ENCODE measurements at regions of chr14 and their contacts with region 1.

Region 1: GRCh38 chr14:102351026-102351425 is 11.7 kb downstream of the CINP start:
- DNase-seq: no peak
- ATAC-seq: no peak
- H3K4me3 ChIP-seq: no peak overlapping the region
- H3K4me3 Mint-ChIP-seq: no peak overlapping the region
- H3K27ac ChIP-seq: no peak overlapping the region
- H3K27ac Mint-ChIP-seq: no peak overlapping the region
- H3K4me1 ChIP-seq: no peaks in the 10 kb centered on the region
- H3K4me1 Mint-ChIP-seq: peaks cover 0 to 5% (median 2%) of the 10 kb centered on the region in 3 donors
- H3K27me3 ChIP-seq: no peaks in the 10 kb centered on the region
- H3K27me3 Mint-ChIP-seq: no peaks in the 10 kb centered on the region

Region 2: GRCh38 chr14:102408724-102409123 is 57.7 kb after region 1 on chr14:
- CTCF ChIA-PET with region 1: no interaction called
- POLR2A ChIA-PET with region 1: interaction called in 1 of 2 experiments, 10 read pairs
- DNase-seq: no peak
- ATAC-seq: no peak
- H3K4me3 ChIP-seq: no peak overlapping the region
- H3K4me3 Mint-ChIP-seq: no peak overlapping the region
- H3K27ac ChIP-seq: no peak overlapping the region
- H3K27ac Mint-ChIP-seq: peak overlapping the region in 1 of 2 donors; percentile 16
- H3K4me1 ChIP-seq: no peaks in the 10 kb centered on the region
- H3K4me1 Mint-ChIP-seq: peaks cover 5 to 6% (median 6%) of the 10 kb centered on the region in 3 donors
- H3K27me3 ChIP-seq: no peaks in the 10 kb centered on the region
- H3K27me3 Mint-ChIP-seq: no peaks in the 10 kb centered on the region